ENCODE measurements at regions of chr2 and their contacts with region 1.

Region 1: GRCh38 chr2:109128048-109128465 is 948 bp upstream of the SH3RF3 start:
- DNase-seq: peak; percentile 89
- ATAC-seq: peak; percentile 87

Region 2: DNA sequence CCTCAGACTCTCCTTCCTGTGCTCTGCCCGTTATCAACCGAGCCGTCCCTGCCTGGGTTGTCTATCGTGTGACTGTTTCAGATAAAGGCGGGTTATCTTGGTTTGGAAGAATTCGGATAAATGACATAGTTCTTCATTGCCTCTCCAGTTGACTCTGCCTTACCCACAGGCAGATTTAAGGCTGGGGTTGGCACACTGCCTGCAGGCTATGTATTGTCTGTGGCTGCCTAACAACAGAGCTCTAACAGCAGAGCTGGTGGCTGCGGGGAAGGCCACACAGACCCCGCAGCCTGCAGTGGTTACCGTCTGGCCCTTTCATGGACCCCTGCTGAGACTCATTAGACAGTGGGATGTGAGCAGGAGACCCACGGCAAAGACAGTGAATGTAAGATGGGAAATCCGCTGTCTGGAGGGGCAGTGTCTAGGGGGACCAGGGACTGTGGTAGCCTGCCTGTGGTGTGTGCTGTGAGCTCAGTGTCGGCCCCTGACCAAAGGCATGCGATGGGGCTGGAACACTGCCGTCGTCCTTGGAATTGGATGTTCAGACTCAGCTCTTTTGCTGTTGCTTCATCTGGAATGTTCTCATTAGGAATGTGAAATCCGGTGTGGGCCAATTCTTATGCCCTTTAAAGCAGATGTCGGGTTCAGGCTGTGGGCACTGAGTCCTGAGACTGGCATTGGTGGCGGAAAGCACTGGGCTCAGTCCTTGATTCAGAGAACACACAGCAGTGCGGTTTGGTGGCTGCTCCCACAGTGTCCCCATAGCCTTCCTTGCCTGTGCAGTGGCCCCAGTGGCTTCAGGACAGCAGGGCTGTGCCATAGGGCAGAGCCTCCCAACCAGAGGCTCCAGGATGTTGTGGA is 45.5 kb after region 1 on chr2:
- intact Hi-C with region 1: loop called (anchors 5 kb)
- DNase-seq: peak; percentile 87
- ATAC-seq: peak; percentile 84

Region 3: DNA sequence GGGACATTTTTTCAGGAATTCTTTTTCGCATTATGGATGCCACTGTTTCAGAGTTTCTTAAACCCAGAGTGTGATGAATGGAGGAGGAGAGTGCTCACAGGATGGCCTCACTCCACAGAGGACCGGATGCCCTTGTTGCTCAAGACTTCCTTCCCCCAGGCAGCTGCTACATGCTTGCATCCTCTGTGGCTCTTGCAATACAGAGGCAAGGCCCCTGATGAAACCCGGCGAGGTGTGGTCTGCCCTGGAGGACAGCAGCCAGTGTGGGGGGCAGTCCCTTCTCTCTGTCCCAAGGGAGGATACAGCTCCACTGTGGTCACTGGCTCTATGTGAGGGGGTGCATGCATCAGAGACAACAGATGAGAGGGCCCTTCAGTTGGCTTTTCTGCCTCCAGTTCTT is 110.5 kb after region 1 on chr2:
- intact Hi-C with region 1: loop called (anchors 5 kb)
- DNase-seq: peak; percentile 91
- ATAC-seq: peak; percentile 52

Region 4: DNA sequence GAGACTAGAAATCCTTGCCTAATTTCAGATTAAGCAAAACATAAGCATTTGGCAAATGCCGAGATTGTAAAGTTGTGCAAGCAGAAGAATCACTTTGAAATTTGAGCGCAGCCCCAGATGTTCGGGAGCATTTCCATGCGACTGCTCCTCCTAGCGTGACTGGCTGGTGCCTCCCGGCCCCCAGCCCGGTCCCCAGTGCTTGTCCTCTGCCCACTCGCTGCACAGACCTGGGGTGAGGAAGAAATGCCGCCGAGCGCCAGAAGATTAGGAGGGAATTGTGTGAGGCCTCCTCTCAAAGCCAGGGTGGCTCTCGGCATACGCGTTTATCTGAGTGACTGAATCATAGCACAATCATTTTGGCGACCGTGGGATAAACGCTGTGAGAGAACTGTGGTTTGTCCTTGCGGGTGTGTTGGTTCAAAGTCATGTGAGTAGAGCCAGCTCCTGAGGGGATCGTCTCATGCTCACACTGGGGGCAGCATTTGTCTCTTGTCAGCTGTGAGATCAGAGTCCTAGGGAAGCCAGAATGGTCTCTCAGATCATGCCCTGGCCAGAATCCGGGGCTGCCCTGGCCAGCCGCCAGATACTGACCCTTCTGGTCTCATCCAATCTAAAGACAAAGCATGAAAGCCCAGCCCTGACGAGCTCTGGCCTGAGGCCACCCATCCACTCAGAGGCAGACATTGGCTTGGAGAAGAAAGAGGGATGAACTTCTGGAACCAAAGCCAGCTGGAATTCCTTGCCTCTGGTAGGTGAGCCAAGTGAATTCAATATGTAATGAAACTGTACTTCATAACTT is 190.3 kb after region 1 on chr2:
- intact Hi-C with region 1: loop called (anchors 2 kb)
- DNase-seq: peak; percentile 90
- ATAC-seq: peak; percentile 79

Region 5: GRCh38 chr2:109510136-109511028 is 382.3 kb after region 1 on chr2:
- intact Hi-C with region 1: loop called (anchors 1 kb)
- DNase-seq: peak; percentile 77
- ATAC-seq: peak; percentile 53

Measured in Right ventricle myocardium inferior (tissue), 1 donor.